ENCODE measurements at regions of chr7 and their contacts with region 1.

Region 1: DNA sequence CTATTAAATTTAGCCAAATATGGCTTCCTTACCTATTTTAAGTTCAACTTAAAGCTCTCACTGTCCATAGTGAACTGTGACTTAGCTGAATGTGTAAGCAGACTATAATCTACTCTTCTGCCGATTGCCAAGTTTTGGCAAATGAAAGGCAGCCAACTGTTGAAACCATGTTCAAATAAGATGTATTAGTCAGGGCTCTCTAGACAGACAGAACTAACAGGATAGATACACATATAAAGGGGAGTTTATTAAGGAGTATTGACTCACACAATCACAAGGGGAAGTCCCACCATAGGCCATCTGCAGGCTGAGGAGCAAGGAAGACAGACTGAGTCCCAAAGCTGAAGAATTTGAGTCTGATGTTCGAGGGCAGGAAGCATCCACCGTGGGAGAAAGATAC is 837.7 kb upstream of the AUTS2 start:
- DNase-seq: no peak
- H3K4me3 ChIP-seq: no peak overlapping the region
- H3K27ac ChIP-seq: no peak overlapping the region
- H3K4me1 ChIP-seq: no peaks in the 10 kb centered on the region
- CTCF ChIP-seq: no peak

Region 2: GRCh38 chr7:67406976-67407375 is 1353.6 kb before region 1 on chr7:
- CTCF ChIA-PET with region 1: no interaction called
- POLR2A ChIA-PET with region 1: interaction called, 10 read pairs
- intact Hi-C with region 1: no loop called
- DNase-seq: no peak
- H3K4me3 ChIP-seq: no peak overlapping the region
- H3K27ac ChIP-seq: no peak overlapping the region
- H3K4me1 ChIP-seq: no peaks in the 10 kb centered on the region
- CTCF ChIP-seq: no peak

Region 3: GRCh38 chr7:68306692-68307107 is 453.9 kb before region 1 on chr7:
- CTCF ChIA-PET with region 1: no interaction called
- POLR2A ChIA-PET with region 1: no interaction called
- intact Hi-C with region 1: no loop called
- DNase-seq: no peak
- H3K4me3 ChIP-seq: no peak overlapping the region
- H3K27ac ChIP-seq: no peak overlapping the region
- H3K4me1 ChIP-seq: no peaks in the 10 kb centered on the region
- CTCF ChIP-seq: no peak

Region 4: DNA sequence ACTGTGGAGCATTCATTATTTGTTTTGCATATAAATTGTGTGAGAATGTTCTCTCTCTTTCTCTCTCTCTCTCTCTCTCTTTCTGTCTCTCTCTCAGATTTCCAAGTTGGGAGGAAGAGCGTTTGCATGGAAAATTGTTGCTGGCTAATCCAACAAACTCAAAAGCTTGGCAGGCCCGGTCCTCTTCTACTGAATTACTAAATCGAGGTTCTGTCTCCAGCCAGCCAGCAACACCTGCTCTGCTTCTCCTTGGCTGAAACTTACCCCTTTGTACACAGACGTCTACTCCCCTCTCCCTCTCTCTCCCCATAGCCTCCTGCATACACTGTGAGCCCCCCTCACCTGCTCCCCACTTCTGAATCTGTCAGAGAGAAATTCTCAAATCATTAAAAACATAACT is 158.7 kb before region 1 on chr7:
- CTCF ChIA-PET with region 1: no interaction called
- POLR2A ChIA-PET with region 1: no interaction called
- intact Hi-C with region 1: no loop called
- DNase-seq: no peak
- H3K4me3 ChIP-seq: no peak overlapping the region
- H3K27ac ChIP-seq: no peak overlapping the region
- H3K4me1 ChIP-seq: peaks cover 20% of the 10 kb centered on the region
- CTCF ChIP-seq: no peak

Region 5: DNA sequence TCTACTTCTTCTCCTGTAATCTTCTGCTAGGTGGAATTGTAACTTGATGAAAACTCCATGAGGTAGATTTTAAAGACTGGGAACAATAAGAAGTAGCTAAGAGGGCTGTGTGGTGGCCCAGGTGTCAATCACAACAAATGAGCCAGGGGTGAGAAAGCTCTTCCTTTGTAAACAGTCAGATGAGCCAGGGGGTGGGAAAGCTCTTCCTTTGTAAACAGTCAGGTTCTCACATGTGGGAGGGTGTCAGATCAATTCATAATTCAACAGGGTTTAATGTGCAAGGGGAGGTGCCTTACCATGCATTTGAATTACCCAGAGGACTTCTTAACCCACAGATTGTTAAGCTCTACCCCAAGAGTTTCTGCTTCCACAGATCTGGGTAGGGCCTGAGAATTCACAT is 525.3 kb after region 1 on chr7:
- CTCF ChIA-PET with region 1: no interaction called
- POLR2A ChIA-PET with region 1: no interaction called
- intact Hi-C with region 1: no loop called
- DNase-seq: no peak
- H3K4me3 ChIP-seq: no peak overlapping the region
- H3K27ac ChIP-seq: no peak overlapping the region
- H3K4me1 ChIP-seq: no peaks in the 10 kb centered on the region
- CTCF ChIP-seq: no peak